Dorsolateral prefrontal cortex (tissue), 120 donors: ENCODE measurements at regions of chr21 and their contacts with region 1.

Region 1: GRCh38 chr21:15564907-15565306 is 164.9 kb upstream of the USP25 start:
- DNase-seq: no peak
- H3K4me3 ChIP-seq: no peak overlapping the region
- H3K27ac ChIP-seq: no peak overlapping the region
- H3K27me3 ChIP-seq: peaks cover 0 to 10% (median 0%) of the 10 kb centered on the region in 45 donors
- CTCF ChIP-seq: no peak

Region 2: DNA sequence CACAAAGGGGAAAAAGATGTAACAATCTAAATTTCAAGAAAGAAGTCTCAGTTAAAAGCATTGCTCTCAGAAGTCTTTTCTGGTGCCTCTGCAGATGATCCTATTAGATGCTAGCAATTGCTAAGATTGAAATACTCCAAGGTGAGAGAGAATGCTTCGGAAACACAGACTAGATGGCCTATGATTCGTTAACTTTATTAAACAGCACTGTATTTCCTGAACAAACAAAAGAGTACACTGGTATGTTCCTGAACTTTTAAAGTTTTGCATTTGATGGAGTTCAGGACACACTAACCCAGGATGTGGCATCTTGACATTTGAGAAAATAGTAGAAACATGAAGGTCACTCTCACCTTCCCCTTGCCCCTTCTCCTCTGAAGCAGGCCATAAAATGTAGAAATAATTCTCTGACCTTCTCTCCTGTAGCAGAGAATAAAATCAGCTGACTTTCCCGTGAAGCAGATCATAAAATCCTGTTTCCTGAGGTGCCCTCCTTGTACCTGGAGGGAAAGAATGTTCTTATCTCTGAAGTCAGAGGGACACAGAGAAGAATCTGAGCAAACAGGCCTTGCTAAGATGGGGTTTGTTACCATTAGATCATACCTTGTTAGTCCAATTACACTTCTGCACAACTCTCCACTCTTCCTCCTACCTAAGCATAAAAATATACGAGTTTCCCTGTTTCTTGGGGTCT is 22.0 kb after region 1 on chr21:
- intact Hi-C with region 1: loop called in 1 of 2 experiments (anchors 1 kb)
- DNase-seq: no peak
- H3K4me3 ChIP-seq: no peak overlapping the region
- H3K27ac ChIP-seq: no peak overlapping the region
- H3K27me3 ChIP-seq: no peaks in the 10 kb centered on the region
- CTCF ChIP-seq: no peak